ENCODE measurements at regions of chr2 and their contacts with region 1.

Region 1: DNA sequence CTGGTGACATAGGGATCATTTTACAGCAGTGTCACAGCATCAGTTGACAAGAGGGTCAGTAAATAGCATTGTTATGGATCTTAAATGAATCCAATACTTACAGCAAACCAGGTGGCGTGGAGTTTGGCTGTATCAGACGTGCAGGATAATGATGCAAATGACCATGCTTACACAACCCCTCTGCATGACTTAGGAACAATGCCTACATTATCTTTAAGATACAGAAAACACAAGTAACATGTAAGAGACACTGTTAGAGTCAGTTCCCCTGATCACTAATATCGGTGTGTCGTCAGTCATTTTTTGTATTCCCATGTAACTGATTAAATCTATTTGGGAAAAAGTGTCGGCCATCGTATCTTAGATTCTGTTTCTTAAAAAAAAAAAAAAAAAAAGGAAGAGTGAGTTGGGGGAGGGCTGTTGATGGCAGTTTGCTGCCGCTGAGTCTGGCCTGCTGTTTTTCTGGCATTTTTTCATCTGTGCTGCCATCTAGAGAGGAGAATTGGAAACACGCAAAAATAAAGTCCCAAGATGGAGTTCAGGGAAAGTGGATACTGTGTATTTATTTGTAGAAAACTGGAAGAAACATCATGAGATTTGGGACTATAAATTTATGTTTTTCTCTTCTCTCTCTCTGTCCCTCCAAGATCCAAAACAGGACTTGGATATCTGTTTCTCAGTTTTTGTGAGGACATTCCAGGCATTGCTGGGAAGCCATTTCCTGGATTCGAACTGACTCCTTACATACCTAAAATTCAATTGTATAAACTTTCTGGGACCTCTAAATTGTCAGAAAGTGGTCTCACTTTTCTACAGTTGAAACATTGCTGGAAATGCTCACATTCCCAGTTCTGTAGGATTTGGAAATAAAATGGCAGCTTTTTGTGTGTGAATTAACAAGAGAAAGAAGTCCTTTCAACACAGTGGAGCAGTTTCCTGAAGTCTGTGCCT is 60.3 kb upstream of the AGPS start:
- DNase-seq: peak; percentile 59 to 62
- H3K4me3 ChIP-seq: no peak overlapping the region
- H3K27ac ChIP-seq: peak overlapping the region; percentile 64 to 88 (median 73)
- H3K4me1 ChIP-seq: peaks cover 0 to 8% of the 10 kb centered on the region in 2 donors
- H3K27me3 ChIP-seq: no peaks in the 10 kb centered on the region
- CTCF ChIP-seq: peak in 5 of 6 experiments; percentile 29 to 94 (median 67)
- POLR2A ChIP-seq: no peak

Region 2: DNA sequence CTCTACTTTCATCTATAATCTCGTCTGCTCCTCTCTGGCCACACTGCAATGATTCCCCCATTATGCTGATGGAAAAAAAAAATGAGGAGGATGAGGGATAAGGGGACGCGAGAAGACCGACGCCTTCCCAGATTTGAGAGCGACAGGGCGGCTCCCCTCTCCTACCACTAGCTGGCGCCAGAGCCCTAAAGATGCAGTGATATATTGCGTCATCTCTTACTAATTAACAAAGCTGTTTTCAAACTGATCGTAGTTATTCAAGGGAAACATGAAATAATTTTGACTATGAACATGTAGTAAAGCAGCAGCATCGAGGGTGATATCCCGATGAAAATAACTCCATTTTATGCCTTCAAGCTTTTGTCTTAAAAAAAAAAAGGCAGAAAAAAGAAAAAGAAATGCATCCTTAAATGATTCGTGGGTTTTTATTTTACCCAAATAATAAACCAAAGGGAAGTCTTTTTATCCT is 167.7 kb before region 1 on chr2:
- intact Hi-C with region 1: loop called (anchors 2 kb)
- DNase-seq: peak; percentile 78 to 84
- H3K4me3 ChIP-seq: peak overlapping the region in 1 of 3 donors; percentile 7
- H3K27ac ChIP-seq: peak overlapping the region; percentile 78 to 90 (median 80)
- H3K4me1 ChIP-seq: peaks cover 14 to 17% of the 10 kb centered on the region in 2 donors
- H3K27me3 ChIP-seq: no peaks in the 10 kb centered on the region
- CTCF ChIP-seq: peak; percentile 99 to 100 (median 100)
- POLR2A ChIP-seq: no peak

Region 3: GRCh38 chr2:177445200-177445599 is 112.9 kb after region 1 on chr2:
- intact Hi-C with region 1: no loop called
- DNase-seq: no peak
- H3K4me3 ChIP-seq: no peak overlapping the region
- H3K27ac ChIP-seq: no peak overlapping the region
- H3K4me1 ChIP-seq: no peaks in the 10 kb centered on the region
- H3K27me3 ChIP-seq: no peaks in the 10 kb centered on the region
- CTCF ChIP-seq: no peak
- POLR2A ChIP-seq: no peak

Region 4: GRCh38 chr2:177604271-177605065 is 272.2 kb after region 1 on chr2:
- intact Hi-C with region 1: loop called (anchors 10 kb)
- DNase-seq: no peak
- H3K4me3 ChIP-seq: no peak overlapping the region
- H3K27ac ChIP-seq: no peak overlapping the region
- H3K4me1 ChIP-seq: no peaks in the 10 kb centered on the region
- H3K27me3 ChIP-seq: no peaks in the 10 kb centered on the region
- CTCF ChIP-seq: peak in 5 of 6 experiments; percentile 13 to 63 (median 53)
- POLR2A ChIP-seq: no peak

Region 5: DNA sequence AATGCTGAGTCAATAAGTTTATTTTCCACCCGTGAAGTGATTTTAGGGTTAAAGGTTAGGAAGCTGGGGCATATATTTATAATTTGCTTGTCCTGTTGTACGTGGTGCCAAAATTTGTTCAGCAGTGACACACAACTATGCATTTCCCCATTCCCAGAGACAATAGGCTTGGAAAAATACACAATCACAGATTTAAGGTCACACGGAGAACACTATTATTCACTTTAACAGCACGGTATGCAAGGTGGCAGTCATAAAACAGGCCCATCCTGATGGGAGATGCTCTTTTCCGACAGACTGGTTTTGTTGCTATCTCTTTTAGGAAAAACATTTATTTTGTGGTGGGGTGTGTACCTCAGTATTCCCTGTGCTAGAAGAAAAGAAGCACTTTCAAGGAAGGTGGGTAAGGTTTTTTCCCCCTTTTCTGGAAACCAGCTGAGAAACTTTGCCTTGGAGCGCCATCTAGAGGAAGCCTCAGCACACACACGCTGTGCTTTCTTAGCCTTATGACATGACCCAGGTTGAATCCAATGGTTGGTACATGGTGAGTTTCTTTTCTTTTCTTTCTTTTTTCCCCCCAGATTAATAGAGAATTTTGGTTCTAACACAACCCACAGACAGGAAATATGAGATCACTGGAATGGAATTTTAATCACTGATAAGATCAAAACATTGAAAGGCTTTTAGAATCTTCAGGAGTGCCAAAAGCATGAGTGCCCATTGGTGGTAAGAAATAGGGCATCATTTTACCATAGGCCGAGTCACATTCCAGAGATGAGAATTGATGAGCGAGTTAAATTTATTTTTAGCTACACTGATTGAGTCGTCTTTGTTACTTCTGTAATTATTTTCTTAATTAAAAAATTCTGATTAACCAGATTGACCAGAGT is 392.3 kb after region 1 on chr2:
- intact Hi-C with region 1: loop called (anchors 10 kb)
- DNase-seq: peak; percentile 15 to 38
- H3K4me3 ChIP-seq: no peak overlapping the region
- H3K27ac ChIP-seq: no peak overlapping the region
- H3K4me1 ChIP-seq: no peaks in the 10 kb centered on the region
- H3K27me3 ChIP-seq: no peaks in the 10 kb centered on the region
- CTCF ChIP-seq: peak; percentile 43 to 68 (median 58)
- POLR2A ChIP-seq: no peak

Region 6: GRCh38 chr2:177763532-177764265 is 431.4 kb after region 1 on chr2:
- intact Hi-C with region 1: loop called (anchors 10 kb)
- DNase-seq: peak; percentile 74 to 81
- H3K4me3 ChIP-seq: no peak overlapping the region
- H3K27ac ChIP-seq: no peak overlapping the region
- H3K4me1 ChIP-seq: peaks cover 0 to 6% of the 10 kb centered on the region in 2 donors
- H3K27me3 ChIP-seq: no peaks in the 10 kb centered on the region
- CTCF ChIP-seq: peak; percentile 53 to 84 (median 59)
- POLR2A ChIP-seq: no peak